OCI-LY7 (cell line): ENCODE measurements at regions of chr21 and their contacts with region 1.

Region 1: GRCh38 chr21:15483138-15483780 is 246.5 kb upstream of the USP25 start:
- DNase-seq: peak; percentile 79
- H3K4me3 ChIP-seq: no peak overlapping the region
- H3K27ac ChIP-seq: no peak overlapping the region
- H3K4me1 ChIP-seq: no peaks in the 10 kb centered on the region
- CTCF ChIP-seq: peak; percentile 91

Region 2: GRCh38 chr21:15592271-15592860 is 109.1 kb after region 1 on chr21:
- CTCF ChIA-PET with region 1: no interaction called
- POLR2A ChIA-PET with region 1: interaction called, 5 read pairs
- intact Hi-C with region 1: loop called (anchors 2 kb)
- DNase-seq: peak; percentile 51
- H3K4me3 ChIP-seq: no peak overlapping the region
- H3K27ac ChIP-seq: no peak overlapping the region
- H3K4me1 ChIP-seq: no peaks in the 10 kb centered on the region
- CTCF ChIP-seq: peak; percentile 89

Region 3: DNA sequence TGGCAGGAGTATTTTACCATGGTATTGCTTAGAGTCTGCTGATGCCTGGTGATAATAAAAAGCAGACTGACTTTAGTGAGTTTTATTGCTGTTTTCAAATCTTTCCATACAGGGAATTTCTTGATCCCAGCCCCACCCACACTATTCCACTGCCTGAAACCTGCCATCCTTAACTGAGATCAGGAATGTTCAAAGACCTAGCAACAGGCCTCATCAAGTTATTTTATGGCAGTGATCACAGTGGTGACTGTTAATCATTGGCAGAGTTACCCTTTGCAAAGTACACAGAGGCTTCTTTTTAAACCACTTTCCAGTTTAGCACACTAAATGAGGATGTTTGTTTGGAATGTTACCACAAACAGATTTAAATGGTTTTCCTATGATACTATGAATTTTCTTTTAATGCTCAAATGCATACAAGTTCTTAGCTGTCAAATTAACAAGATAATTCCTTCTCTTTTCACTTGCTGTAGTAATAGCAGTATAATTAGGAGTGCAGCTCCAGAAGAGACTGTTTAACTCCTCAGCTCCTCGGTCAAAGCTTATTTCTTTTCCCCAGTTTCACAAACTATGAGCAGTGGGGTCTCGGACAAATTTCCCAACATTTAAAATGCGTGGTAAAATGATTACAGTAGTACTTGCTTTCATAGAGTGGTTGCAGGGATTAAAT is 176.6 kb after region 1 on chr21:
- CTCF ChIA-PET with region 1: no interaction called
- POLR2A ChIA-PET with region 1: no interaction called
- intact Hi-C with region 1: no loop called
- DNase-seq: no peak
- H3K4me3 ChIP-seq: no peak overlapping the region
- H3K27ac ChIP-seq: no peak overlapping the region
- H3K4me1 ChIP-seq: no peaks in the 10 kb centered on the region
- CTCF ChIP-seq: no peak

Region 4: DNA sequence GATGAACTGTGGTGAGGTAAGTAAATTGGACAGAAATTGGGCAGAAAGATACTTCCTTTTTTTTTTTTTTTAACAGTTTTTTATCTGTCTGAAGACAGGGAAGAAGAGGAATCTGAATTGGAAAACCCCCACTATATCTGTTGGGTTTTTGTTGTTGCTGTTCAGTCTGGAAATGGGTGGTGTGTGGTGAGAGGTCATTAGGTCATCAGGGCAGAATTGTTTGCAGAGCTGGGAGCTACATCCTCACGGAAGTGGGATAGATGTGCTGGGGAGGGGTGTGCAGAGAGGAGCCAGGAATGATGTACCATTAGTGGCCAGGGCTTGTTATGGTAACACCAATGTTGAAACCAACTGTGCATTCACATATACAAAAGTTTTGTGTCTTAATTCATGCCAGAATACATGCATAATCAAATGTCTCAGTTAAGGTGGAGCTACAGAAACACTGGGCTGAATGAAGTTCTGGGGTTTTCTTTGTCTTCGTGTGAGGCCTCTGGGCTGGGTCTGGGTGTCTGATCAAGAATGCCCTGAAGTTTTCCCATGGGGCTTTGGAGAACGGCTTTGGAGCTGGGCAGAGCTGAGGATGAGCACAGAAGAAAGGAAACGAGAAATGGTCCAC is 258.9 kb after region 1 on chr21:
- CTCF ChIA-PET with region 1: no interaction called
- POLR2A ChIA-PET with region 1: interaction called, 10 read pairs
- intact Hi-C with region 1: no loop called
- DNase-seq: no peak
- H3K4me3 ChIP-seq: no peak overlapping the region
- H3K27ac ChIP-seq: no peak overlapping the region
- H3K4me1 ChIP-seq: no peaks in the 10 kb centered on the region
- CTCF ChIP-seq: no peak